ENCODE measurements at regions of chrX and their contacts with region 1.

Region 1: GRCh38 chrX:69615779-69616456 is at the start of gene EDA:
- DNase-seq: peak; percentile 77
- ATAC-seq: peak; percentile 87
- H3K4me3 ChIP-seq: peak within 1 kb of the TSS; percentile 62
- H3K27ac ChIP-seq: no peak within 1 kb of the TSS
- H3K4me1 ChIP-seq: peaks cover 6% of the 10 kb centered on the region; the same call in 1 of the 2 replicates
- H3K27me3 ChIP-seq: peaks cover 28% of the 10 kb centered on the region
- CTCF ChIP-seq: no peak
- total RNA-seq, gene EDA: 0.15 and 1.0 TPM in 2 replicates

Region 2: GRCh38 chrX:69538321-69538876 is 77.5 kb before region 1 on chrX:
- CTCF ChIA-PET with region 1: interaction called, 6 read pairs
- POLR2A ChIA-PET with region 1: no interaction called
- intact Hi-C with region 1: loop called (anchors 2 kb)
- DNase-seq: peak; percentile 58
- ATAC-seq: peak; percentile 97
- H3K4me3 ChIP-seq: peak overlapping the region; percentile 63
- H3K27ac ChIP-seq: no peak overlapping the region
- H3K4me1 ChIP-seq: no peaks in the 10 kb centered on the region
- H3K27me3 ChIP-seq: 0 out of 2 replicates have a peak, but pooled peaks cover 4% of the 10 kb centered on the region
- CTCF ChIP-seq: peak; percentile 81

Region 3: DNA sequence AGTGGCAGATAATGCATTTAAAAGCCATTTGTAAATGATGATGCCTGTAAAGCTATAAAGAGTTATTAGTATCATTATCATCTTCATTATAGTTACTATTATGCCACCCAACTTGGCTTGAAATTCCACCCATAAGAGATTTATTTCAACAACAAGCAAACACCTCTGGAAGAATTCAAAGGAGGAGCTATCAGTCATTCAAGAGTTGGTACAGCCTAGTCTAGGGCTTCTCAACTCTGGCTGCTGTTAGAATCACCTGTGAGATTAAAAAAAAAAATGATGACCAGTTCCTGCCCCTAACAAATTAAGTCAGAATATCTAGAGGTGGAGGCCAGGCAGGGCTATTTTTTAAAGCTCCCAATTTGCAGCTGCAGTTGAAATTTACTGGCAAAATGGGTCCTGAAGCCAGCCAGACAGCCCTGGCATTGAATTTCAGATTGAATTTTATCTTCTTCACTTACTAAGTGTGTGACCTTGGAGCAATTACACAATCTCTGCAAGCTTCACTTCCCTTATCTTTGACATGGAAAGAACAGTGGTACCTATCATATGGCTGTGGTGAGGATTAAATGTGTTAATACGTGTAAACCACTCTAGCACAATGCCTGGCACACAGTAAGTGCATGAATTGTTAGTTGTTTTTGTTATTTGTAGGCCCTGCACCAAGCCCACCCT is 52.9 kb before region 1 on chrX:
- CTCF ChIA-PET with region 1: no interaction called
- POLR2A ChIA-PET with region 1: no interaction called
- intact Hi-C with region 1: no loop called
- DNase-seq: no peak
- ATAC-seq: no peak
- H3K4me3 ChIP-seq: no peak overlapping the region
- H3K27ac ChIP-seq: no peak overlapping the region
- H3K4me1 ChIP-seq: no peaks in the 10 kb centered on the region
- H3K27me3 ChIP-seq: no peaks in the 10 kb centered on the region; the same call in 1 of the 2 replicates
- CTCF ChIP-seq: no peak

Region 4: DNA sequence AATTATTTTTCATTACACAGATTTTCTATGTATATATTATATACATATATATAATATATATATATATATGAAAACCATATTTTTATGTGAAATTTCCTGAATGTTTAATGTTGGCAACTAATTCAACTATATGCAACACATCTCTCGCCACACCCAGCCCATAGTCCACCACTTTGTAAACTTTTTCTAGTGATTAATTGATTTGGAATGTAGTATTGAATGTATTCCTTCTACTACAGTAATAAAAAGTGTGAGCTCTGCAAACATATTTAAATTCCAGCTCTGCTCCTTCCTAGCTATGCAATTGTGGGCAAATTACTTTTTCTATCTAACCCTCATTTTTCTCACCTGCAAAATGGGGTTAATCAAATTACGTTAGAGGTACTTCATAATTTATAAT is 1104.8 kb after region 1 on chrX:
- CTCF ChIA-PET with region 1: no interaction called
- POLR2A ChIA-PET with region 1: no interaction called
- intact Hi-C with region 1: no loop called
- DNase-seq: peak; percentile 74
- ATAC-seq: peak; percentile 85
- H3K4me3 ChIP-seq: no peak overlapping the region
- H3K27ac ChIP-seq: no peak overlapping the region
- H3K4me1 ChIP-seq: peaks cover 14% of the 10 kb centered on the region
- H3K27me3 ChIP-seq: no peaks in the 10 kb centered on the region
- CTCF ChIP-seq: no peak